A673 (cell line): ENCODE measurements at regions of chr12 and their contacts with region 1.

Region 1: DNA sequence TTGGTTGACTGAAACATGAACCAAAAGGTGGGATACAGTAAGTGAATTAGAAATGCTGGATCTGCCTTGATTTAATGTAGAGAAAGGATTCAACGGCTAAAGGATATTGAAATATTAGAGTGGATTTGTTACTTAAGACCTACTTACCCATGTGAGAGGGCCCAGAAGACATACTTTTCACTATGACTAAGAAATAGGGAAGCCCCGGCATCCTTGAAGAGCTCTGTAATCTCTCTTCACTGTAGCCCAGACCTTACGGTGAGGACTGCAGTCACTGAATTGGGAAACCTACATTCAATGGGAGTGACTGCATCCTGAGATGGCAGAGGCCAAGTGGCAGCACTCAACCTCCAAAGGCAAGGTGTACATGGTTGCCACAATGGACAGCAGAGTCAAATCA is 52.5 kb downstream of the KANSL2 start:
- DNase-seq: no peak
- H3K4me3 ChIP-seq: no peak overlapping the region
- H3K27ac ChIP-seq: no peak overlapping the region
- H3K4me1 ChIP-seq: no peaks in the 10 kb centered on the region
- H3K27me3 ChIP-seq: peaks cover 7% of the 10 kb centered on the region
- CTCF ChIP-seq: no peak

Region 2: DNA sequence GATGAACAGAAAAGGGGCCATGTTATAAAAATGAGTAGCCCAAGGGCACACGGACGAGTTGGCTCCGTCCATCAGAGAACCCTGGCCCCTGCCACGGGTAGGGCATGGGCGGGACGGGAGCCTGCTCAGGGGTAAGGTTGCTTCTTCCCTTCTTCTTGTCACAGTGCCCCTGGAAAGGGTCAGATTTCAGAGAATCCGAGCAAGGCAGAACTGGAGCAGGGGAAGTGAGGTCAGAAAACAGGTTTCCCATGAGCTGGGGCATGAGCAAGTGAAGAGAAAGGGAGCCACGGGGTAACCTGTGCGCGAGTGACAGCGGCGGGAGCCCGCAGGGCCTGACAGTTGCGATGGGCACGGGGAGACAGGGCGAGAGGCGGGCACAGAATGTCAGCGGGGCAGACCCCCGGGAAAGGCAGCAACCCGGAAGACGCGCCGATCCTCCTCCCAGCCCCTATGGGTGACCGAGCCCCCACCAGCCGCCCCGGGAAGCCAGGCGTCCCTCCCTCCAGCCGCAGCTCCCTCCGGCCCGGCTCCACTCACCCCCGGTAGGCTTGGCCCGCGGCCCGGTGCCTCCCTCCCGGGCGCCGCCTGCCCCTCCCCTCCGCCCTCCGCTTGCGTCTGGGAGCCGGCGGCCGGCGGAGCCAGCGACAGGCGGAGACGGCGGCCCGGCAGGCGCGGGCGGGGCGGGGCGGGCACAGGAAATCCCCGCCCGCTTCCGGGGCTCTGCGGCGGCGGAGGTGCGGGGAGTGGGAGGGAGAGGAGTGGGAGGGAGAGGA is 279.1 kb before region 1 on chr12 and contains the start of gene ZNF641:
- CTCF ChIA-PET with region 1: no interaction called
- POLR2A ChIA-PET with region 1: no interaction called
- intact Hi-C with region 1: no loop called
- DNase-seq: peak; percentile 85
- H3K4me3 ChIP-seq: peak within 1 kb of the TSS; percentile 78
- H3K27ac ChIP-seq: peak within 1 kb of the TSS; percentile 70
- H3K4me1 ChIP-seq: peaks cover 8% of the 10 kb centered on the region
- H3K27me3 ChIP-seq: no peaks in the 10 kb centered on the region
- CTCF ChIP-seq: no peak
- total RNA-seq, gene ZNF641: 9.9 and 13.7 TPM in 2 replicates

Region 3: DNA sequence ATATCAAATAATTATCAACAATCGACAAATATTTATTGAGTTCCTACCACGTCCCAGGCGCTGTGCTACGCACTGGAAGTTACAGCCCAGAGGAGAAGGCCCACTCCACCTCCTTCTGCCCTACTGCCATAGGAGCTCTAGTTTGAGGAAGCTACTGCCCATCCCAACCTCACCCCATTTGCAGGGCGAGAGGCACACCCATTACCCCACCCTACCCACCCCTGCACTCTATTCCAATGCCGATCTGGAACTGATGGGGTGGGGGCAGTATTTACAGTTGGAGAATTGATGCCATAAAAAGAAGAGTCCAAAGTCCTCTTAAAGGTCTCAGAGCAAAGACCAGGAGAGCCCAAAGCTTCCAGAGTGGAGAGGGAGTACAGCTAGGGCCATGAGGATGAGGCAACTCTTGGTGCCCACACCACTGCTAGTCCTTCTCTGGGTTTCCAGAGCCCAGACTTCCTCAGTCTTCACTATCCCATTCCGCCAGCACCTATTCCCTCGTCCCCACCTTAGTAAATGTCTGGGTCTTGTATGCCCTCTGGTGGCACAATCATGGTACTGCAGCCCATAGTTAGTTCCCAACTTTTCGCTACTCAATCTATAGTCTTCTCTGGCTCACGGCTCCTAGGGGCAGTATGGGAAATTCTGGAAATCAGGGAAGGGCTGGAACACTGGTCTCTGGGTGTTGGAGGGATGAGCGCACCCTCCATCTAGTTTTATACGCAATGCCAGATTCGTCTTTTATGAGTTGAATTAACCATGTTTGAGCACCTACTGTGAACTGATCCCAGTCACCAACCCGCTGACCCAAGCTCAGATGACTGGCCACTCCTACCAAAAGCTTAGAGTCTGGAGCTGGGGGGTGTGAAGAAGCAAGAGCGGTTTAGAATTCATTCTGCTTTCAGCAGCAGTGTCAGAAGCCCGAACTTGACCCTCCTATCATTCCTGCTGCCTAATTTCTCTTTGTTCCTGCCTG is 166.2 kb after region 1 on chr12:
- CTCF ChIA-PET with region 1: no interaction called
- POLR2A ChIA-PET with region 1: no interaction called
- intact Hi-C with region 1: loop called (anchors 10 kb)
- DNase-seq: peak; percentile 84
- H3K4me3 ChIP-seq: no peak overlapping the region
- H3K27ac ChIP-seq: no peak overlapping the region
- H3K4me1 ChIP-seq: no peaks in the 10 kb centered on the region
- H3K27me3 ChIP-seq: no peaks in the 10 kb centered on the region
- CTCF ChIP-seq: peak; percentile 93